ENCODE measurements at regions of chr3 and their contacts with region 1.

Region 1: DNA sequence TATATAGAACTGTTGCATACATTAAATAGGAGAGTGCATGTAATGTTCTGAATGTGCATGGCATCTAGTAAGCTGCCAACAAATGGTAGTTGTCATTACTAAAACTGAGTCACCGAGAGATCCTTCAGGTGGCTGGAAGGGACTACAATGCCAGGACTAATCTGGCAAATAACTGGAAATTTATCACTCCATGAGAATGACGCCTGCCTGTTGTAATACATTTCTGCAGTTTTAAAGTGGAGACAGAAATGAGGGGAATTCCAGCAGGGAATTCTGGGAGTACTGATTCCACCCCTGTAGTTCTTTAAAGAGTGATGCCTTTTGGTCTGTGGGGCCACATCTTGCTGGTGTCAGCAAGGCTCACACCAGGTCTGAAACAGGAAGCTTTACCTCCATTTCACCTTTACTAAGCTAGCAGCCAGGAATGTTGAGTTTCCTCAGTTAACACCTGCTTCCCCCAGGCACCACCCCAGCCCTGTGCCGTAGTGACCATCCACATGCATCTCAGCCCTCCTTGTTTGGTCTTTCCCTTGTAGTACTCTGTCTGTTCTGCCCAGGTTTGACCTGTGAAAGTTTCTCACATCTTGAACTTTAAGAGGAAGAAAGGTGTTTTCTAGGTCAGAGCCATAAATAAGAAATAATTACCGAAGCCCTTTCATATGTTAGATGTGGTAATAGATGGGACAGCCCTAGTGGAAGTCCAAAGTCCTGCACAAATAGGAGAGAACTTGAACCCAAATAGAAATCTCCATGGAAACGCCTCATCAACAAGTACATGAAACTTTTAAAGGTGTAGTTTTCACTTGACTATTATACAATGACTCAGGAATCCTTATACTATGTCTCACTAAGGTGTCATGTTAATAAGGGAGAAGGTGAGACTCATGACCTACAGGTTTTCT is 56.7 kb upstream of the LMOD3 start:
- DNase-seq: no peak
- ATAC-seq: no peak

Region 2: GRCh38 chr3:70999730-71000129 is 1820.6 kb after region 1 on chr3:
- intact Hi-C with region 1: loop called (anchors 10 kb)
- DNase-seq: no peak
- ATAC-seq: peak; percentile 64

Measured in sciatic nerve (tissue), 2 donors.